ENCODE measurements at regions of chr20 and their contacts with region 1.

Region 1: GRCh38 chr20:53427951-53428350 is 165.7 kb downstream of the ZNF217 start:
- DNase-seq: no peak
- ATAC-seq: no peak
- H3K4me3 Mint-ChIP-seq: no peak overlapping the region
- H3K27ac Mint-ChIP-seq: no peak overlapping the region
- H3K4me1 Mint-ChIP-seq: no peaks in the 10 kb centered on the region
- H3K27me3 Mint-ChIP-seq: peaks cover 11% of the 10 kb centered on the region
- CTCF ChIP-seq: no peak

Region 2: GRCh38 chr20:53312957-53313356 is 115.0 kb before region 1 on chr20:
- CTCF ChIA-PET with region 1: no interaction called
- POLR2A ChIA-PET with region 1: no interaction called
- intact Hi-C with region 1: no loop called
- DNase-seq: no peak
- ATAC-seq: no peak
- H3K4me3 Mint-ChIP-seq: no peak overlapping the region
- H3K27ac Mint-ChIP-seq: no peak overlapping the region
- H3K4me1 Mint-ChIP-seq: no peaks in the 10 kb centered on the region
- H3K27me3 Mint-ChIP-seq: peaks cover under 1% of the 10 kb centered on the region
- CTCF ChIP-seq: no peak

Region 3: DNA sequence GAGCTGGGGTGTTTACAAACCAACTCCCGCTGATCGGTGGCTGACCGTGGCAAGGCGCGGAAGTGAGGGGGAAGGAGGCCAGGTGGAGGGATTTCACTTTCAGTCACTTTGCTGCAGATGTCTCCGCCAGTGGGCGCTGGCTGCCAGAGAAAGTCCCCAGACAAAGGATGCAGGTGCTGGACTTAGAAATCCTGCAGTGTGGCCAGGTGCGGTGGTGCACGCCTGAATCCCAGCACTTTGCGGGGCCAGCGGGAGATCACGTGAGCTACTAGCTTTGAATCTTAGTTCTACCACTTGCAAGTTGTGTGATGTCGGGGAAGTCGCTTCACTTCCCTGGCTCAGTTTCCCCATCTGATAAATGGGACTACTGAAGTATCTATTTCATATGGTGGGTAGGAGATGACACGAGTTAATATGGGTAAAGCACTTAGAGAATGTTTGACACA is 14.7 kb before region 1 on chr20:
- CTCF ChIA-PET with region 1: no interaction called
- POLR2A ChIA-PET with region 1: interaction called, 10 read pairs
- intact Hi-C with region 1: no loop called
- DNase-seq: peak; percentile 43
- ATAC-seq: peak; percentile 70
- H3K4me3 Mint-ChIP-seq: peak overlapping the region; percentile 58
- H3K27ac Mint-ChIP-seq: no peak overlapping the region
- H3K4me1 Mint-ChIP-seq: peaks cover 6% of the 10 kb centered on the region
- H3K27me3 Mint-ChIP-seq: peaks cover 2% of the 10 kb centered on the region
- CTCF ChIP-seq: no peak